T-cell (primary cell): ENCODE measurements at regions of chr15 and their contacts with region 1.

Region 1: DNA sequence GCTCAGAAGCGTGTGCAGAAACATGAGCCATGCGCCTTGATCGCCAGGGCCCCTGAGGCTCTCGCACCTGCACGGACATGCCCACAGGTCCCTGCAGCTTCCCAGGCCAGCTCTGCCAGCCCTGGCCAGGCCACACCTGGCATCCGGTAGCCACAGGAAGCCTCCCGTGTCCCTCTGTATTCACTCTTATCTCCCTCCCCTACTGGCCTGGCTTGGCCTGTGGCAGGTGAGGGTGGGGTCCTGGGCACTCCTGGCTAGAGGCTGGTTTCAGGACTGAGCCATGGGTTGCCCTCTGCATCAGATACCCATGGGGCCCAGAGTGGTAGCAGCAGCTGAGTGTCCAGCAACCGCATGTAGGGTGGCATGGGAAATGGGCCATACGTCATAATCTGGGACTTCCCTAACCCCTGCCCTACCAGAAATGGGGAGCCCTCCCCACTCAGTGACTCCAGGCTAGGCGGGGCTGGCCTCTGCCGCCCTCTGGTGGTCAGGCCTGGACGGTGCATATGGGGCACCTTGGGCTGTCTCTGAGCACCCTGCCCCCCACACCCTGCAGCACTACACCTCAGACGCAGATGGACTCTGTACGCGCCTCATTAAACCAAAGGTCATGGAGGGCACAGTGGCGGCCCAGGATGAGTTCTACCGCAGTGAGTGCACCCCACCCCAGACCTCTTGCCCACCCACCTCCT is 12.6 kb upstream of the LMAN1L start:
- DNase-seq: peak; percentile 72 to 94 (median 84)
- ATAC-seq: peak; percentile 85 to 91 (median 86)
- H3K4me3 ChIP-seq: peak overlapping the region in 1 of 2 donors; percentile 7
- H3K4me3 Mint-ChIP-seq: peak overlapping the region in 1 of 3 donors; percentile 53
- H3K27ac ChIP-seq: peak overlapping the region; percentile 87
- H3K27ac Mint-ChIP-seq: peak overlapping the region; percentile 86 to 89
- H3K4me1 ChIP-seq: peaks cover 32 to 57% of the 10 kb centered on the region in 2 experiments
- H3K4me1 Mint-ChIP-seq: peaks cover 48 to 57% (median 50%) of the 10 kb centered on the region in 3 donors
- H3K27me3 ChIP-seq: no peaks in the 10 kb centered on the region
- H3K27me3 Mint-ChIP-seq: no peaks in the 10 kb centered on the region

Region 2: GRCh38 chr15:74674119-74674518 is 125.9 kb before region 1 on chr15:
- CTCF ChIA-PET with region 1: no interaction called
- POLR2A ChIA-PET with region 1: no interaction called
- DNase-seq: no peak
- ATAC-seq: no peak
- H3K4me3 ChIP-seq: no peak overlapping the region
- H3K4me3 Mint-ChIP-seq: no peak overlapping the region
- H3K27ac ChIP-seq: no peak overlapping the region
- H3K27ac Mint-ChIP-seq: no peak overlapping the region
- H3K4me1 ChIP-seq: no peaks in the 10 kb centered on the region
- H3K4me1 Mint-ChIP-seq: peaks cover under 1 to 13% (median 12%) of the 10 kb centered on the region in 3 donors
- H3K27me3 ChIP-seq: no peaks in the 10 kb centered on the region
- H3K27me3 Mint-ChIP-seq: no peaks in the 10 kb centered on the region

Region 3: GRCh38 chr15:74781431-74782258 is 18.4 kb before region 1 on chr15 and contains the start of gene CSK:
- CTCF ChIA-PET with region 1: interaction called, 9 to 158 read pairs
- POLR2A ChIA-PET with region 1: no interaction called
- DNase-seq: peak; percentile 53 to 92 (median 72)
- ATAC-seq: peak; percentile 66 to 76 (median 68)
- H3K4me3 ChIP-seq: peak within 1 kb of the TSS; percentile 90 to 95
- H3K4me3 Mint-ChIP-seq: peak within 1 kb of the TSS; percentile 93 to 97 (median 93)
- H3K27ac ChIP-seq: peak within 1 kb of the TSS; percentile 97
- H3K27ac Mint-ChIP-seq: peak within 1 kb of the TSS; percentile 99
- H3K4me1 ChIP-seq: peaks cover 50 to 89% of the 10 kb centered on the region in 2 experiments
- H3K4me1 Mint-ChIP-seq: peaks cover 78 to 83% (median 80%) of the 10 kb centered on the region in 3 donors
- H3K27me3 ChIP-seq: no peaks in the 10 kb centered on the region
- H3K27me3 Mint-ChIP-seq: no peaks in the 10 kb centered on the region
- total RNA-seq, gene CSK: 198 to 296 (median 271) TPM

Region 4: DNA sequence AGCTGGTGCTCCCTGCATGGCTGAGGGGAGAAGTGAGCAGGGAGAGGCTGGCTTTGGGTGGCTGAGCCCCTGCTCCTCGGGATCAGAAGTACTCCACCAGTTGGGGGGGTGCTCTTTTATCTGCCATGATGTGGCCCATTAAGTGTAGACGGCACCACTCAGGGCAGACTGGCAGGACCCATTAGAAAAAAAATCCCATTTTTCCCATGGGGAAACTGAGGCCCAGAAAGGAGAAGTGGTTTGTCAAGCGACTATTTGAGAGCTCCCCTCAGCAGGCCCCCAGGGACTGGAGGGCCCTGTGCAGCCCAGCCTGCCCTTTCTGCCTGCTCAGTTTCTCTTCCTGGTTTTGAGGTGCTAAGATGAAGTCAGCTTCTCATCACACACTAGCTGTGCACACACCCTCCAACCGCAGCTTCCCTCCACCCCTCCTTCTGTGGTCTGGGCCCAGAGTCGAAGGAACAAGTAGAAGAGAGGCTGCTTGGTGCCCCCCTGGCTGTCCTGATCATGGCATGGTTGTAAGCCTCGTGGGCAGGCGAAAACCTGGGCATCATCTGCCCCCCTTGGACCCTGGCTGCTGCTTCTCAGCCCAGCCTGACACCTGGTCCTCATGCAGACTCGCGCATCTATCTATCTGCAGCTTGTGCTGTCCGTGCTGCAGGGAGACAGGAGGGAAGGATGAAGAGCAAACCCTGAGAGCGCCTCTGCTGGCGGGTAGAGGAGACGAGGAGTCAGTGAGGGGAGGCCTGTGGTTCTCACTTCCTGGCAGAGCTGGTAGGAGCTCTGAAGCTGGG is 12.6 kb before region 1 on chr15:
- CTCF ChIA-PET with region 1: interaction called, 9 to 158 read pairs
- POLR2A ChIA-PET with region 1: interaction called in 1 of 2 experiments, 3 read pairs
- DNase-seq: peak; percentile 81 to 96 (median 91)
- ATAC-seq: peak; percentile 76 to 81 (median 76)
- H3K4me3 ChIP-seq: peak overlapping the region; percentile 90 to 95
- H3K4me3 Mint-ChIP-seq: peak overlapping the region; percentile 84 to 93 (median 93)
- H3K27ac ChIP-seq: peak overlapping the region; percentile 93
- H3K27ac Mint-ChIP-seq: peak overlapping the region; percentile 99 to 100
- H3K4me1 ChIP-seq: peaks cover 55 to 91% of the 10 kb centered on the region in 2 experiments
- H3K4me1 Mint-ChIP-seq: peaks cover 86 to 90% (median 87%) of the 10 kb centered on the region in 3 donors
- H3K27me3 ChIP-seq: no peaks in the 10 kb centered on the region
- H3K27me3 Mint-ChIP-seq: no peaks in the 10 kb centered on the region

Region 5: DNA sequence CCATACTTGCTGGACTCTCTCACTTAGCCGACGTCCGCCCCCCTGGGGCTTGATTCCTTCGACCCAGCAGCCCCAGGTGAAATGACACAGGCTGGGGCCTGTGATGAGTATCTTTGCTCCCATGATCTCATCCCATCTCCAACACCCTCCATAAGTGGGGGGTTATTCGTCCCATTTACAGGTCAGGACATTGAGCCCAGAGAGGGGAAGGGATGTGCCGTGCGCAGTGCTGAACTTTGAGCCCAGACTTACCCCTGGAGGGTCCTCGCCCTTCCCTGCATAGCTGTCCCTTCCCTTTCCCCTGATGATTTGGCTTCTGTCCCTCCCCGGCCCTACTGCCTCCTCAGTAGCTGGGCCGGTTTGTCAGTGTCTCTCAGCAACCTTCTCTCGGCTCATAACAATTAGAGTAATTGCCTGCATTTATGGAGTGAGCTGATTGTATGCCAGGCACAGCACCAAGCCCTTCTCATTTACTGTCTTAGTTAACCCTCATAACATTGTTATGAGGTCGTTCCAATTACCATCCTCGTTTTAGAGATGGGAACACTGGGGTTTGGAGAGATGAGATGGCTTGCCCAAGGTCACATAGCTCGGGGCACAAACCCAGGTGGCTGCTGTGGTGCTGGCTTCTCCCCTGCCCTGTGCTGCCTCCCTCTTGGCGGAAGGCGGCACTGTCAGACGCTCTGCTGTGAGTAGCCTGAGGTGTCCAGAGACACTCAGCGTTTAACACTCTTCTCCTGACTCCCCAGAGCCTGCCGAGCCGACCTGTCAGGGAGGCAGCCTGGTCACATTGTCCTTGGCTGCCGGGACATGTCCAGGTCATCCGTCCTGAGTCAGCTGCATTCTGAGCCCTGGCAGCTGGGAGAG is 17.0 kb after region 1 on chr15:
- CTCF ChIA-PET with region 1: no interaction called
- POLR2A ChIA-PET with region 1: no interaction called
- DNase-seq: no peak
- ATAC-seq: no peak
- H3K4me3 ChIP-seq: no peak overlapping the region
- H3K4me3 Mint-ChIP-seq: no peak overlapping the region
- H3K27ac ChIP-seq: no peak overlapping the region
- H3K27ac Mint-ChIP-seq: no peak overlapping the region
- H3K4me1 ChIP-seq: peaks cover 0 to 13% of the 10 kb centered on the region in 2 experiments
- H3K4me1 Mint-ChIP-seq: peaks cover 0 to 13% (median 8%) of the 10 kb centered on the region in 3 donors
- H3K27me3 ChIP-seq: peaks cover 0 to 41% of the 10 kb centered on the region in 2 experiments
- H3K27me3 Mint-ChIP-seq: peaks cover 0 to 2% of the 10 kb centered on the region in 2 donors